Posterior vena cava (tissue), 2 donors: ENCODE measurements at regions of chr16 and their contacts with region 1.

Region 1: GRCh38 chr16:29154676-29155121 is 169.8 kb downstream of the LAT start:
- DNase-seq: no peak

Region 2: DNA sequence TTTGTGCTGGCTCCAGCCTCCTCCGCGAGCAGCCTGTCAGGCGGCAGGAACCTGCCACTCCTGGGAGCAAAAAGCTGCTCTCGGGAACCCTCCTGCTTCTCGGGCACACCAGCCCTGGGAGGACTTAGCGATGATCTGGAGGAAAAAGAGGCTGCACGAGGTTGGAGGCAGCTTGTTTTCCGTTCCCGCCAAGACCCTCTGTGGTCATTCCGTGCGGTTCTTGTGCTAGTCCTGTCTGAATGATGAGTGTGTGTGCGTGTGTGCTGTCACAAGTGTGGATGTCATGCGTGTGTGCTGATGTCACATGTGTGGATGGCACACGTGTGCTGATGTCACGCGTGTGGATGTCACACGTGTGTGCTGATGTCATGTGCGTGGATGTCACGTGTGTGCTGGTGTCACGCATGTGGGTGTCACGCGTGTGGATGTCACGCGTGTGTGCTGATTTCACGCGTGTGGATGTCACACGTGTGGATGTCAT is 101.8 kb after region 1 on chr16:
- intact Hi-C with region 1: no loop called
- DNase-seq: no peak

Region 3: GRCh38 chr16:30378236-30379204 is 1223.8 kb after region 1 on chr16:
- intact Hi-C with region 1: loop called in 1 of 2 experiments (anchors 5 kb)
- DNase-seq: peak; percentile 100